Right cardiac atrium (tissue), 5 donors: ENCODE measurements at regions of chr7 and their contacts with region 1.

Region 1: GRCh38 chr7:76314042-76314721 is 11.7 kb downstream of the HSPB1 start:
- DNase-seq: peak; percentile 97 to 99 (median 98)
- ATAC-seq: peak; percentile 67 to 70
- H3K4me3 ChIP-seq: no peak overlapping the region
- H3K27ac ChIP-seq: no peak overlapping the region
- H3K4me1 ChIP-seq: peaks cover 6% of the 10 kb centered on the region
- H3K27me3 ChIP-seq: no peaks in the 10 kb centered on the region

Region 2: GRCh38 chr7:76179686-76180085 is 134.5 kb before region 1 on chr7:
- intact Hi-C with region 1: loop called (anchors 1 to 10 kb)
- DNase-seq: no peak
- ATAC-seq: no peak
- H3K4me3 ChIP-seq: no peak overlapping the region
- H3K27ac ChIP-seq: no peak overlapping the region
- H3K4me1 ChIP-seq: no peaks in the 10 kb centered on the region
- H3K27me3 ChIP-seq: no peaks in the 10 kb centered on the region

Region 3: GRCh38 chr7:76291343-76292212 is 22.6 kb before region 1 on chr7:
- intact Hi-C with region 1: loop called in 2 of 4 experiments (anchors 1 kb)
- DNase-seq: peak; percentile 94 to 96 (median 95)
- ATAC-seq: peak; percentile 85 to 88
- H3K4me3 ChIP-seq: peak overlapping the region; percentile 11
- H3K27ac ChIP-seq: peak overlapping the region; percentile 97
- H3K4me1 ChIP-seq: peaks cover 17% of the 10 kb centered on the region
- H3K27me3 ChIP-seq: no peaks in the 10 kb centered on the region

Region 4: GRCh38 chr7:76359111-76359978 is 45.2 kb after region 1 on chr7:
- intact Hi-C with region 1: loop called in 2 of 4 experiments (anchors 5 kb)
- DNase-seq: peak; percentile 96 to 99 (median 98)
- ATAC-seq: peak; percentile 96 to 97
- H3K4me3 ChIP-seq: peak overlapping the region; percentile 84
- H3K27ac ChIP-seq: peak overlapping the region; percentile 94
- H3K4me1 ChIP-seq: peaks cover 2% of the 10 kb centered on the region
- H3K27me3 ChIP-seq: no peaks in the 10 kb centered on the region